Vagina (tissue), 2 donors: ENCODE measurements at regions of chr7 and their contacts with region 1.

Region 1: GRCh38 chr7:106216517-106216922 is 68.3 kb downstream of the NAMPT start:
- DNase-seq: no peak
- H3K4me3 ChIP-seq: peak overlapping the region in 1 of 2 donors; percentile 7
- H3K27ac ChIP-seq: peak overlapping the region; percentile 80
- H3K4me1 ChIP-seq: peaks cover 37% of the 10 kb centered on the region
- H3K27me3 ChIP-seq: no peaks in the 10 kb centered on the region
- CTCF ChIP-seq: no peak
- POLR2A ChIP-seq: no peak

Region 2: GRCh38 chr7:106112117-106112971 is 104.2 kb before region 1 on chr7 and contains the start of gene SYPL1:
- intact Hi-C with region 1: no loop called
- DNase-seq: peak in 1 of 2 donors; percentile 94
- H3K4me3 ChIP-seq: peak within 1 kb of the TSS; percentile 76 to 88
- H3K27ac ChIP-seq: peak within 1 kb of the TSS; percentile 98
- H3K4me1 ChIP-seq: peaks cover 41% of the 10 kb centered on the region
- H3K27me3 ChIP-seq: no peaks in the 10 kb centered on the region
- CTCF ChIP-seq: no peak
- POLR2A ChIP-seq: peak in 1 of 2 donors; percentile 68
- total RNA-seq, gene SYPL1: 76.9 TPM

Region 3: DNA sequence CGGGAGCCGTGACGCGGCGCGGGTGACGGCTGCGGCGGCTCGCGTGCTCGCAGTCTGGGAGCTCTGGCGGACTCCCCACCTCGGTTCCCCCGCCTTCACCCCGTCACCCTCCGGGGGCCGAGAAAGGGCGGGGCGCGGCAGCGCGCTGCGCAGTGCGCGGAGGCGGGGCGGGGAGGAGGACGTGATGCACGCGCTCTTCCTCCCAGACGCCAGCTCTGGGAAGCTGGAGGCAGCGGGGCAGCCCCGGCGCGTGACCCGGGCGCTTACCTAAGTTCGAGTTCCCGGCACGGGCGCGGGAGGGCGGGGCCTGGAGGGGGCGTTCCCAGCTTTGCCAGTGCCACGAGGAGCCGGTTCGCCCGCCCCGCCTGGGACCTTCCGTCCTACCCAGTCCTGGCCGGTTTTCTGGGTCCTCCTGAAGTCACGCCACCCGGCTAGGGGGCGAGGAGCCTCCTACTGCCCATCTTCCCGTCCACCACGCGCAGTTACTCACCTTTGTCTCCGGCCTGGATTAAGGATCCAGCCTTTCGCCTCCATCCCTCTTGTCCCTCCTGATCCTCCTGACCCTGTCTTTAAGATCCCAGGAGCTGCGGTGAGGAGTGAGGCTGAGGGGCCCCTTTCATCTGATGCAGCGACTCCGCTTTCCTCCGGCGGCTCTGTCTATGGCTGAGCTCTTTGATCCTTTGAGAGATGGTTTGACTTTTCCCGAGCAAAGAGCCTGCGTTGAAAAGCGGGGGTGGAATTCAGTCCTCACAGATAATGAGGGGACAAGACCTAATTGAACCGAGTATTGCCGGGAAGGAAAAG is 68.7 kb after region 1 on chr7:
- intact Hi-C with region 1: loop called (anchors 2 kb)
- DNase-seq: peak; percentile 99
- H3K4me3 ChIP-seq: peak overlapping the region; percentile 82 to 87
- H3K27ac ChIP-seq: peak overlapping the region; percentile 98
- H3K4me1 ChIP-seq: peaks cover 44% of the 10 kb centered on the region
- H3K27me3 ChIP-seq: no peaks in the 10 kb centered on the region
- CTCF ChIP-seq: no peak
- POLR2A ChIP-seq: peak in 1 of 2 donors; percentile 41